Right ventricle myocardium inferior (tissue), 1 donor: ENCODE measurements at regions of chr20 and their contacts with region 1.

Region 1: DNA sequence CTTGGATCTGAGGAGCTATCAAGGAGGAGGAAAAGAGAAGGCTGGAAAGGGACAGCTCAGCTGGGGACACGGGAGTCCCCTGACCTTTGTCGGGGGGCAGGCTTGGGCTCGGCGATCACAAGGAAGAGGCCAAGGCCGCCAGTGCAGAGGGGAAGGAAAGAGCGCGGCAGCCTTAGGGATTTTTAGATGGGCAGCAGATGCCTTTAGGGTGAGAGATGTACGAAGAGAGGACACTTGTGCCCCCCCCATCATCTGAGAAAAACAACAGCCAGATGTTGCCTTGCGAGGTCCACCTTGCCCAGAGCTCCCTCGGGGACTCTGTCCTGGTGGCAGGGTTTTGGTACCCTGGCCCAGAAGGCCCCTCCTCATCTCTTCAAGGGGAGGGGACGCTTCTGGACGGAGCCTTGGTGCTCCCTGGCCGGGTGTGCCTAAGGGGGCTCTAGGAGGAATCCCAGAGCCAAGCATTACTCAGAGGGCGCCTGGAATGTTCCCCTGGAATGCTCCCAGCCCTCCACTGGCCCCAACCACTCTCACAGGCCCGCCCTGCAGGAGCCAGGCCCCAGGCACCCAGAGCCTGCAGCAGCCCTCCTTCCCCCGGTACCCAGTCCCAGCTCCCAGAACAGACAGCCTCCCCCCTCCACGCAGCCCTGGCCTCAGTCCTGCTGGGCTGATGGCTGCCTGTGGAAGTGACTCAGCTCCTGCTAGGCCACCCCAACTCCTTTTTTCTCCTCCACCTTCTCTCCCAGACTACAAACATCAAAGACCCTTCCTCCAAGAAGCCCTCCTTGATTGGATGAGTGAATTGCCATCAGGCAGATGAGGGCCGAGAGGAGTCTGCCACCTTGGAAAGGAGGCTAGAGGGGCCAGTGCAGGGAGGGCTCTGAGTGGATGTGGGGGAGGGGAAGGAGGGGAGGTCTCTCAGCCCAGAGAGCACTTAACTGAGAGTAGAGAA is 1.8 kb downstream of the ADAM33 start:
- DNase-seq: peak; percentile 71
- ATAC-seq: peak; percentile 49

Region 2: GRCh38 chr20:3595541-3595940 is 84.5 kb before region 1 on chr20:
- intact Hi-C with region 1: no loop called
- DNase-seq: no peak
- ATAC-seq: no peak

Region 3: GRCh38 chr20:3661060-3661813 is 18.8 kb before region 1 on chr20:
- intact Hi-C with region 1: no loop called
- DNase-seq: no peak
- ATAC-seq: no peak

Region 4: GRCh38 chr20:3710703-3711483 is 30.9 kb after region 1 on chr20:
- intact Hi-C with region 1: loop called (anchors 1 kb)
- DNase-seq: peak; percentile 86
- ATAC-seq: peak; percentile 42

Region 5: GRCh38 chr20:3767427-3768341 is 87.7 kb after region 1 on chr20 and contains the start of gene ADISSP:
- intact Hi-C with region 1: loop called (anchors 5 kb)
- DNase-seq: peak; percentile 100
- ATAC-seq: peak; percentile 96
- total RNA-seq, gene ADISSP: 14.6 TPM

Region 6: GRCh38 chr20:4084096-4084495 is 404.1 kb after region 1 on chr20:
- intact Hi-C with region 1: loop called (anchors 1 kb)
- DNase-seq: no peak
- ATAC-seq: no peak